Spleen (tissue), 13 donors: ENCODE measurements at regions of chr12 and their contacts with region 1.

Region 1: GRCh38 chr12:89352492-89353187 is at the start of gene DUSP6:
- DNase-seq: peak; percentile 98
- H3K4me3 ChIP-seq: peak within 1 kb of the TSS; percentile 79 to 93 (median 84)
- H3K27ac ChIP-seq: peak within 1 kb of the TSS; percentile 97 to 100 (median 98)
- H3K4me1 ChIP-seq: peaks cover 18 to 87% (median 62%) of the 10 kb centered on the region in 6 donors
- H3K27me3 ChIP-seq: no peaks in the 10 kb centered on the region
- CTCF ChIP-seq: peak in 3 of 11 experiments; percentile 0 to 32 (median 27)
- POLR2A ChIP-seq: peak in 1 of 3 donors; percentile 95
- total RNA-seq, gene DUSP6: 104 to 193 (median 143) TPM

Region 2: DNA sequence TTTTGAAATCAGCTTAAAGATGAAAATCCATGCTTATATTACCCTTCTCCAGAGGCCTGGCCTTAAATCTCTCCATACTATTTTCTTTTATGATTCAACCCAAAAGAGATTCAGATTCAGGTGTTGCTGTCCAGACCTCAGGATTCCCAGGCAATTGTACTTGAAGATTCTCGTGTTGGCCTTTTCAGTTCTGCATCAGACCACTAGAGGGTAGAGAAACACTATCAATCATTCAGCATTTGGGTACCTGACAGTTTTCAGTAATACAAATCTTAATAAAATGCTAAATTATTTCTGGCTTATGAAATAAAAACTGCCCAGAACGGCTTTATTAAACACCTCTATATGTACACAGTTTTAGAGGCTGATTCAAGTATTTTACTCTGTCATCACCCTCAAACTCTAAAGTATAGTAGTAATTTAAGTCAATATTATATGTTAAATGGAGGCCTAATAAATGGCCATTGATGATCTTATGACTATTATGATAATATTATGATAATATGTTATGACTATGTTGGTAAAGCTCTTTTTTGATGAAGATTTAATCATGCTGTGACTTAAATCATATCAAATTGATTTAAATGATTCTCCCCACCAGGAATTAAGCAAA is 301.5 kb before region 1 on chr12:
- intact Hi-C with region 1: loop called (anchors 10 kb)
- DNase-seq: no peak
- H3K4me3 ChIP-seq: no peak overlapping the region
- H3K27ac ChIP-seq: peak overlapping the region in 1 of 8 donors; percentile 21
- H3K4me1 ChIP-seq: peaks cover 0 to 14% (median 8%) of the 10 kb centered on the region in 6 donors
- H3K27me3 ChIP-seq: no peaks in the 10 kb centered on the region
- CTCF ChIP-seq: peak; percentile 81 to 93 (median 88)
- POLR2A ChIP-seq: no peak

Region 3: DNA sequence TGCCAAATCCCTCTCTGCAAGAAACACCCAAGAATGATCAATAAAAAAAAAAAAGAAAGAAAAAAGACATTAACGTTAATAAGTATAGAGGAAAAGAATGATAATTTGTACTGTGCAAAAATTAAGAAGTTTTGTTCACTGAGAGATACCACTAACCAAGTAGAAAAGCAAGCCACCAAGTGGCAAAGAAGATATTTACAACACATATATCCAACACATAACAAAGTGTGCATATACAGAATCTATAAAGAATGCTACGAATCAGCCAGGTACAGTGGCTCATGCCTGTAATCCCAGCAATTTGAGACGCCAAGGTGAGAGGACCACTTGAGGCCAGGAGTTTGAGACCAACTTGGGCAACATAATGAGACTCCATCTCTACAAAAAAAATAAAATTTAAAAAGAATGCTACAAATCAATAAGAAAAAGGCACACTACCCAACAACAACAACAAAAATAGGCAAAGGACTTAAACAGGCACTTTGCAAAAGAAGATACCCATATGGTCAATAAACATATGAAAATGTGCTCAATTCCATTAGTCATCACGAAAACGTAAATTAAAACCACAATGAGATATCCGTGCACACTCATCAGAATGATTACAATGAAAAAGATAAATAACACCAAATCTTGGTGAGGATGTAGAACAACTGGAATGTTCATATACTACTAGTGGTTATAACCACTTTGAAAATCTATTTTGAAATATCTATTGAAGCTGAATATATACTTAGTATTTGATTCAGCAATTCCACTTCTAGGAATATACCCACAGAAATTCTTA is 152.1 kb after region 1 on chr12:
- intact Hi-C with region 1: no loop called
- DNase-seq: no peak
- H3K4me3 ChIP-seq: no peak overlapping the region
- H3K27ac ChIP-seq: no peak overlapping the region
- H3K4me1 ChIP-seq: no peaks in the 10 kb centered on the region
- H3K27me3 ChIP-seq: no peaks in the 10 kb centered on the region
- CTCF ChIP-seq: no peak
- POLR2A ChIP-seq: no peak

Region 4: GRCh38 chr12:90076851-90077319 is 724.2 kb after region 1 on chr12:
- intact Hi-C with region 1: no loop called
- DNase-seq: no peak
- H3K4me3 ChIP-seq: no peak overlapping the region
- H3K27ac ChIP-seq: no peak overlapping the region
- H3K4me1 ChIP-seq: peaks cover 0 to 3% (median 0%) of the 10 kb centered on the region in 6 donors
- H3K27me3 ChIP-seq: no peaks in the 10 kb centered on the region
- CTCF ChIP-seq: no peak
- POLR2A ChIP-seq: no peak